MCF 10A (cell line): ENCODE measurements at regions of chr9 and their contacts with region 1.

Region 1: GRCh38 chr9:9605681-9606080 is 1007.1 kb downstream of the PTPRD start:
- DNase-seq: no peak
- H3K4me3 Mint-ChIP-seq: no peak overlapping the region
- H3K27ac Mint-ChIP-seq: no peak overlapping the region
- H3K4me1 Mint-ChIP-seq: no peaks in the 10 kb centered on the region
- H3K27me3 Mint-ChIP-seq: peaks cover 11% of the 10 kb centered on the region
- CTCF ChIP-seq: no peak

Region 2: DNA sequence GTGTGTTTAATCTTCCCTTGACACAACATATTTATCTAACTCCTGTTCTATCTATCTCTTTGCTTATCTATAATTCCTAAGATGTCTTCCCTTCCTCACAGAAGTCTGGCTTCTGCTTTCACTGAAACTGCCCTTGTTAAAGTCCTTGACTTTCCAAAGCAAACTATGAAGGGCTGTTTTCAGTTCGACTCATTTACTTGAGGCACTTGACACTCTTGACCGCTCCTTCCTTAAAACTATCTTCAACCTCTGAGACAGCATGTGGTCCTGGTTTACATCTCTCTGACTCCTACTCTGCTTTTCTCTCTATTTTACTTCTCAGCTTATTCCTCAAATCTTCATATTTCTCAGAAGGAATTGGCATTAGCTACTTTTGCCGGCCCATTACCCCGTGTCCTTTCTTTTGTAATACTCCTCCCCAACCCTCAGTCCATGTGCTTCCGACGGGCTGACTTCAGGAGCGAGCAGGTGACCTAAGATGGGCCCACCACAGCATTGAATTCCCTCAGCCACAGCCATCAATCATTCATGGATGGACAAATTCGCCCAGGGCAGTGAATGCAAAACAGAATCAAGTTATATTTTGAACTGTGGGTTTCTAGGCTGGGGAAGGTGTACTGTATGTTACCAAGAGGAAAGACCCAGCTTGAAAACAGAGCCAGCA is 82.1 kb before region 1 on chr9:
- CTCF ChIA-PET with region 1: no interaction called
- POLR2A ChIA-PET with region 1: no interaction called
- intact Hi-C with region 1: no loop called
- DNase-seq: no peak
- H3K4me3 Mint-ChIP-seq: no peak overlapping the region
- H3K27ac Mint-ChIP-seq: no peak overlapping the region
- H3K4me1 Mint-ChIP-seq: no peaks in the 10 kb centered on the region
- H3K27me3 Mint-ChIP-seq: peaks cover 30% of the 10 kb centered on the region
- CTCF ChIP-seq: no peak

Region 3: GRCh38 chr9:9625248-9625647 is 19.6 kb after region 1 on chr9:
- CTCF ChIA-PET with region 1: interaction called, 15 read pairs
- POLR2A ChIA-PET with region 1: interaction called, 3 read pairs
- intact Hi-C with region 1: no loop called
- DNase-seq: no peak
- H3K4me3 Mint-ChIP-seq: no peak overlapping the region
- H3K27ac Mint-ChIP-seq: no peak overlapping the region
- H3K4me1 Mint-ChIP-seq: no peaks in the 10 kb centered on the region
- H3K27me3 Mint-ChIP-seq: peaks cover 46% of the 10 kb centered on the region
- CTCF ChIP-seq: no peak

Region 4: GRCh38 chr9:9790216-9790872 is 184.7 kb after region 1 on chr9:
- CTCF ChIA-PET with region 1: interaction called, 34 read pairs
- POLR2A ChIA-PET with region 1: no interaction called
- intact Hi-C with region 1: loop called (anchors 1 kb)
- DNase-seq: peak; percentile 47
- H3K4me3 Mint-ChIP-seq: no peak overlapping the region
- H3K27ac Mint-ChIP-seq: no peak overlapping the region
- H3K4me1 Mint-ChIP-seq: no peaks in the 10 kb centered on the region
- H3K27me3 Mint-ChIP-seq: peaks cover 17% of the 10 kb centered on the region
- CTCF ChIP-seq: peak; percentile 54

Region 5: DNA sequence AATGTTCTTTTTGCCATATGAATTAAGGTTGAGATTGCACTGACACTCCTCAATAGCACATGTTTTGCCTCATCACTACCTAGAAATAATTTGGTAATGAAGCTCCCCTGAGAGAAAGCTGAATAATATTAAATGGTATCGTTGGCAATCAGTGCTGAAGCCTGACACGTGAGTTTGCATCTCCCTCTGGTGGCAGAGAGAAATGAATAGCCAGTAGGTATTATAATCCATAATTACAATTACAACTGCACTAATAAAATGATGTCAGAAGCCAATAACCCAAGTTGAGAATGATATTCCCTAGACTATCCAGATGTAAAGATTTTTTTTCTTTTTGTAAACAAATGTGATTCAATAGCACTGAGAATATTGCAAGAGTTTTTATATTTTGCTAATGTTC is 306.8 kb after region 1 on chr9:
- CTCF ChIA-PET with region 1: interaction called, 5 read pairs
- POLR2A ChIA-PET with region 1: interaction called, 3 read pairs
- intact Hi-C with region 1: loop called (anchors 2 kb)
- DNase-seq: peak; percentile 27
- H3K4me3 Mint-ChIP-seq: no peak overlapping the region
- H3K27ac Mint-ChIP-seq: no peak overlapping the region
- H3K4me1 Mint-ChIP-seq: no peaks in the 10 kb centered on the region
- H3K27me3 Mint-ChIP-seq: peaks cover 55% of the 10 kb centered on the region
- CTCF ChIP-seq: peak; percentile 45

Region 6: GRCh38 chr9:9942764-9943424 is 337.2 kb after region 1 on chr9:
- CTCF ChIA-PET with region 1: interaction called, 23 read pairs
- POLR2A ChIA-PET with region 1: no interaction called
- intact Hi-C with region 1: loop called (anchors 1 kb)
- DNase-seq: peak; percentile 65
- H3K4me3 Mint-ChIP-seq: no peak overlapping the region
- H3K27ac Mint-ChIP-seq: no peak overlapping the region
- H3K4me1 Mint-ChIP-seq: no peaks in the 10 kb centered on the region
- H3K27me3 Mint-ChIP-seq: peaks cover 51% of the 10 kb centered on the region
- CTCF ChIP-seq: peak; percentile 78